Sciatic nerve (tissue), 2 donors: ENCODE measurements at regions of chr3 and their contacts with region 1.

Region 1: DNA sequence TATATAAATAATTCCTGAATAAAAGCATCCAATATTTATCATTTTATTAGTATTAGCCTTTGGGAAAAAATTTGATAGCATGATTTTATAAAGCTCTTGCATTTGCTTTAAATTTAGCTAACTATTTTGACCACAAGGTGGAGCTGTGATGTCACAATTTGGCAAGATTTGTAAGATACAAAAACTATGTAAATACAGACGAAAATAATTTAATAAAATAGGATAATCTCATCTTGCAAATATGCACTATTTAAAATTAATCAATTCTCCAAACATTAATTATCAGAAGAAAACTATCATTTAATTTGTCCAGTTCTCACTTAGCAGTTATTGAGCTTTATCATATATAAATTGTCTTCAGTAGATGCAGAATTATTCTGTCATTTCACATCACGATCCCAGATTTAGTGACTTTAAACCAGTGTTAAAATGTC is 95.4 kb downstream of the PLOD2 start:
- DNase-seq: no peak
- ATAC-seq: no peak

Region 2: DNA sequence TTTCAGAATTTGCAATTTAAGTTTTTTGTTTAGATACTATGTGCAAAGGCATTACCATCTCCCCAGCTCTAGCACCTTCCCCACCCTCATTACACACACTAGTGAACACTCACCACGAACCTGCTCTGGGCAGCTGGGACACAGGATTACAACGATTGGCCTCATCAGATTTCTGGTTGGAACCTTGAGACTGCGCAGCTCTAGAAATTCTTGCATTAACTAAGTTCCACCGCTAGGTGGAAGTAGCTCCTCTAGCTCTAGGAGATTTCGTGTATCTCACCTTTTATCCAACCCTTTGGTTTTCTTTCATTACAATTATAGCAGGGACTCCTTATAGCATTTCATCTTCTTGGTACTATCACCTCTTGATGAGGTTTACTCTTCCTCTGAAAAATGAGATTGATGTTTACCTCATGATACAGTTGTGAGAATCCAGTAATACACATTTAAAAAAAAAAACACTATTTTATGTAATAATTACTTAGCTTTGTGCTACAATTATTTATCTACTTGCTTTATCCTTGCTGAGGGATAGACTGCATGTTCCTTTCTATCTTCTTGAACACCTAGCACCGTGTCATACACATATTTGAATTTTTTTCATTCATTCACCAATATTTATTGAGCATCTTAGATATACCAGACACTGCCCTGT is 124.1 kb after region 1 on chr3:
- intact Hi-C with region 1: loop called (anchors 5 kb)
- DNase-seq: peak; percentile 48
- ATAC-seq: peak; percentile 85

Region 3: GRCh38 chr3:146203776-146204175 is 138.2 kb after region 1 on chr3:
- intact Hi-C with region 1: no loop called
- DNase-seq: no peak
- ATAC-seq: no peak